A673 (cell line): ENCODE measurements at regions of chr2 and their contacts with region 1.

Region 1: GRCh38 chr2:203077448-203077847 is 62.8 kb downstream of the NBEAL1 start:
- DNase-seq: no peak
- H3K4me3 ChIP-seq: no peak overlapping the region
- H3K27ac ChIP-seq: no peak overlapping the region
- H3K4me1 ChIP-seq: no peaks in the 10 kb centered on the region
- H3K27me3 ChIP-seq: no peaks in the 10 kb centered on the region
- CTCF ChIP-seq: no peak

Region 2: GRCh38 chr2:203040966-203041521 is 36.4 kb before region 1 on chr2:
- CTCF ChIA-PET with region 1: no interaction called
- POLR2A ChIA-PET with region 1: no interaction called
- intact Hi-C with region 1: loop called (anchors 1 kb)
- DNase-seq: no peak
- H3K4me3 ChIP-seq: no peak overlapping the region
- H3K27ac ChIP-seq: no peak overlapping the region
- H3K4me1 ChIP-seq: peaks cover 8% of the 10 kb centered on the region
- H3K27me3 ChIP-seq: no peaks in the 10 kb centered on the region
- CTCF ChIP-seq: no peak